HEK293 (cell line): ENCODE measurements at regions of chr19 and their contacts with region 1.

Region 1: GRCh38 chr19:45632468-45633196 is 6.6 kb downstream of the EML2 start:
- H3K4me3 ChIP-seq: no peak overlapping the region
- H3K27ac ChIP-seq: no peak overlapping the region
- H3K4me1 ChIP-seq: peaks cover 13% of the 10 kb centered on the region
- CTCF ChIP-seq: no peak

Region 2: DNA sequence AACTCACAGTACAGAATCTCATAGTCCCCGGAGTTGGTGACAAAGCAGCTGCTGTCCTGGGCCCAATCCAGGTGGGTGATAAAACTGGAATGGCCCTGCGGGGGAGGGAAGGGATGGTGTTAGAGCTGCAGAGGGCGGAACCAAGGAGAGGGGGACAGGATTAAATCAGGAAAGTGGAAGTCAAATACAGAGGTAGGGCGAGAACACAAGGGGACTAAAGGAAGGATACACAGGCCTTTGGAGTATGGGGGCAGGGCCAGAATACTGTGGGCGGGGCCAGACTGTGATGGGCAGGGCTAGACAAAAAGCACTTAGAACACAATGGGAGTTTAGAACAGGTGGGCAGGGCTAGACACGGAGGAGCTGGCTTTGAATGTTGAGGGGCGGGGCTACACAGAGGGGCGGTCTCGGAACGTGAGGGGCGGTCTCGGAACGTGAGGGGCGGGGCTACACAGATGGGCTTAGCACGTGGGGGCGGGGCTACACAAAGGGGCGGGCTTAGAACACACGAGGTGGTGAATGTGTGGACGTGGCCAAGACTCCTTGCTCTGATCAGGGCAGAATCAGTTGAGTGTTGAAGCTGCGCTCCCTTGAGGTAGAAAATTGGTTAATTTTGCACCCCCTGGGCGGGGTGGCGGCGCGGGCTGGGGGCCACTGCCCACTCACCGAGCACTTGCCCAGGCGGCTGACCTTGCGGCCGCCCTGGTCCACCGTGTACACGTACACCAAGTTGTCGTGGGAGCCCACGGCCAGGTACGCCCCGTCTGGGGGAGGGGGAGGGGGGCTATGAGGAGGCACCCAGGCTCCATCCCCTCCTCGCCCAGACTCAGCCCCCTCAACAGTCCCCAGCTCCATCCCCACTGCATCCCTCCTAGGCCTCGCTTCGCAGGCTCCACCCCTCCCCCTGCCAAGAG is 16.6 kb before region 1 on chr19:
- CTCF ChIA-PET with region 1: interaction called, 102 read pairs
- POLR2A ChIA-PET with region 1: interaction called, 19 read pairs
- H3K4me3 ChIP-seq: no peak overlapping the region
- H3K27ac ChIP-seq: peak overlapping the region; percentile 56; the same call in 1 of the 2 replicates
- H3K4me1 ChIP-seq: peaks cover 13% of the 10 kb centered on the region
- CTCF ChIP-seq: no peak

Region 3: DNA sequence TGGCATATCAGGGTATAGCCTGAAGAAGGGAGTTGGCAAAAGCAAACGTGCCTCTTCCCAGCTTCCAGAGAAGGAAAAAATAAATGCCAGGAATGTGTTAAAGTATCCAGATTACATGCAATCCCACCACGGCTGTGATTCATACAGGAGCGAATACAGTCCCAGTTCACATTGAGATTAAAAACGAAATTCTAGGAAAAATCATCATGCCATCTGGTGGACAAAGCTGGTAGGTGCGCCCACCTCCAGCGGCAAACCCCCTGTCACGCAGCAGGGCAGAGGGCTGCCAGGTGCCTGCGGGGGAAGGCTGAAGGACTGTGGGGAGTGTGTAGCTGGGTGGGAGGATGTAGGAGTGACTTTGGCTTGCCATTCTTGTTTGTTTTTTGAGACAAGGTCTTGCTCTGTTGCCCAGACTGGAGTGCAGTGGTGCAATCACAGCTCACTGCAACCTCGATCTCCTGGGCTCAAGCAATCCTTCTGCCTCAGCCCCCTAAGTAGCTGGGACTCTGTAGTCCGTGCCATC is 166.4 kb after region 1 on chr19:
- CTCF ChIA-PET with region 1: no interaction called
- POLR2A ChIA-PET with region 1: no interaction called
- H3K4me3 ChIP-seq: no peak overlapping the region
- H3K27ac ChIP-seq: no peak overlapping the region
- H3K4me1 ChIP-seq: peaks cover 2% of the 10 kb centered on the region; the same call in 1 of the 2 replicates
- CTCF ChIP-seq: peak; percentile 76

Region 4: DNA sequence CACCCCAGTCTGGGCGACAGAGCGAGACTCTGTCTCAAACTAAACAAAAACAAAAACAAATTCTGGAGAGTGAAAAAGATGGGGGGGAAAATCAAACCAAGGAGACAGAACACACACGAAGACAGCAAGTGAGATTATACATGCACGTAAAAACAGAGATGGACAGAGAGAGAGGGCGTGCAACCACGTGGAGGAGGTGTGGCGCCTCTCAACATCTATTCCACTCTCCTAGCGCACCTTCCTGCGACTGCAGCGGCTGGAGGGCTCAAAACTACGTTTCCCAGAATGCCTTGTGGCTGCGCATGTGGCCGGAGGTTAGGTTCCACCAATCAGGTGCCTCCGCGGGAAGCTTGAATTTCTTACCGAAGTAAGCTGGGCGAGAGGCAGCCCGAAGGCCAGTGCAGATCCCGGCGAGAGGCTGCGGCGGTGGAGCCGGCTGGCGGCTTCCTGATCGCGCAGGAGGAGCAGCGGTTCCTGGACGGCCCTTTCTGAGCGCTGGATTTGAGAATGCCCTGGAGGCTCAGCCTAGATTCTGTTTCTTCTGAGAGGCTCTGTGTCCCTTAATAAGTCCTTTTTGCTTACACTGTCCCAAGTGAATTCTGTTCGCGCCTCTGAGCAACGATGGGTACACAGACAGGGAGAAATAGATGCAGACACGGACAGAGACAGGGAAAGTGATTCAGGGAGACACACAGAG is 295.1 kb after region 1 on chr19:
- CTCF ChIA-PET with region 1: no interaction called
- POLR2A ChIA-PET with region 1: no interaction called
- H3K4me3 ChIP-seq: no peak overlapping the region
- H3K27ac ChIP-seq: no peak overlapping the region
- H3K4me1 ChIP-seq: no peaks in the 10 kb centered on the region
- CTCF ChIP-seq: peak; percentile 35